ENCODE measurements at regions of chr5 and their contacts with region 1.

Region 1: DNA sequence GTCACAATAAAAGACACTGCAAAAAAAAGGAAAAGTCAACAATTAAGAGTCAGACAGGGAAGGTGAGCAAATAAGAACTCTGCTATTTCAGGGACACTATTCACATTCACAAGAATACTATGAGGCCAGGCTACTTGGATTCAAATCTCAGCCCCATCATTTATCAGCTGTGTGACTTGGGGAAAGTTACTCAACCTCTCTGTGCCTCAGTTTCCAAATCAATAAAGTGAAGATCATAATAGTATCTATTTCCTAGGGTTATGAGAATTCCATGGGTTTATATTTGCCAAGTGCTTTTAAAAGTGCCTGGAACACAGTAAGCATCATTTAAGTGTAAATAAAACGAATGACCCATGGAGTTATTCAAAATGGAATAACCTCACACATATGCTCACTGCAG is 56.4 kb downstream of the ALDH7A1 start:
- DNase-seq: no peak
- ATAC-seq: no peak
- H3K4me3 ChIP-seq: no peak overlapping the region
- H3K4me3 Mint-ChIP-seq: no peak overlapping the region
- H3K27ac ChIP-seq: no peak overlapping the region
- H3K27ac Mint-ChIP-seq: no peak overlapping the region
- H3K4me1 ChIP-seq: no peaks in the 10 kb centered on the region
- H3K4me1 Mint-ChIP-seq: peaks cover 5% of the 10 kb centered on the region
- H3K27me3 ChIP-seq: no peaks in the 10 kb centered on the region
- H3K27me3 Mint-ChIP-seq: no peaks in the 10 kb centered on the region
- CTCF ChIP-seq: no peak

Region 2: DNA sequence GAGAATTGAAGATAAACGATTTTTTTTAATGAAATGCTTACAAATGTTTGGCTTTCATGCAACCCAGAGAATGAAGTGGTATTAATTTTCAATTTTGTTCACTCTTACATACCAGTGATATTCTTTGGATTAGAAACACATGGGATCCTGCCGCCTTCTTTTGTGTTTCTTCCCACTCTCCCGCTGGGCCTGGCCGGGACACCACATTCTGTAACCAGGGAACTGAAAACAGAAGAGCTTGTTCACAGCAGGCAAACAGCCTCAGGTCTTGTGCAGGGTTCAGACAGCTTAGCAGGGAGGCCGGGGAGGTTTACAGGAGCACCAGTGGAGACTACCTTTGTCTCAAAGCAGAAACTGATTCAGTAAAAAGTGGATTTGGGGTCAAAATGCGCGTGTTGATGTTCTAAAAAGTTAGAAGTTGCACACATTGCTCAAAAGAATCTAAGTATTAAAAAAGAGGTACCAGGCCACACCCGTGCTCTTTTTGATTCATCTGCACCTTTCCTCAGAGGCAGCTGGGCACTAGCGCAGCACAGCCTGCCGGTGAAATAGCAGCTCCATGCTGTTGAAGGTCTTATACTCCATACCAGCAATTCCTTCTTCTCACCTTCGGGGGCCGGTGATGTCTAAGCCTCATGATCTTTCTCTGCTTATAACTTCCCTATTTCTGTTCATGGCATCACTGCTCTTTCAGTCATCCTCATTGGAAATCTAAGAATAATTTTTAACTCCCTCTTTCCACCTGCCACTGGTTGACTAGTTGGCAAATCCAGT is 48.2 kb before region 1 on chr5:
- CTCF ChIA-PET with region 1: no interaction called
- POLR2A ChIA-PET with region 1: no interaction called
- intact Hi-C with region 1: loop called in 1 of 2 experiments (anchors 2 kb)
- DNase-seq: no peak
- ATAC-seq: no peak
- H3K4me3 ChIP-seq: no peak overlapping the region
- H3K4me3 Mint-ChIP-seq: no peak overlapping the region
- H3K27ac ChIP-seq: no peak overlapping the region
- H3K27ac Mint-ChIP-seq: peak overlapping the region; percentile 12
- H3K4me1 ChIP-seq: no peaks in the 10 kb centered on the region
- H3K4me1 Mint-ChIP-seq: no peaks in the 10 kb centered on the region
- H3K27me3 ChIP-seq: no peaks in the 10 kb centered on the region
- H3K27me3 Mint-ChIP-seq: no peaks in the 10 kb centered on the region
- CTCF ChIP-seq: no peak

Region 3: DNA sequence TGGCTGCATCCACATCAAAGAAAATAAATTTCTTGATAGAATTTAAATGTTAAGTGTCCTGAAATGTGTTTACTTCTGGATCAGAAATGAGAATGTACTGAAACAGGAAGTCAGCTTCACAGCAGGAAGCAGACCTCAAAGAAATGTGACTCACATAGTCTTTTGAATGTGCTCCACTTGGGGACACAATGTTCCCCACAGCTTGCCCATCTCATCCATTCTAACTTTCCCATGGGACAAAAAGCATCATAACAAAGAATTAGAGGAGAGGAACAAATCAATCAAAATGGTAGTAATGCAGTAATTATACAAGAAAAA is 29.7 kb before region 1 on chr5:
- CTCF ChIA-PET with region 1: no interaction called
- POLR2A ChIA-PET with region 1: no interaction called
- intact Hi-C with region 1: loop called in 1 of 2 experiments (anchors 2 kb)
- DNase-seq: peak in 4 of 14 experiments; percentile 28 to 64 (median 55)
- ATAC-seq: peak; percentile 90
- H3K4me3 ChIP-seq: peak overlapping the region; percentile 29
- H3K4me3 Mint-ChIP-seq: peak overlapping the region; percentile 85
- H3K27ac ChIP-seq: peak overlapping the region in 1 of 2 donors; percentile 11
- H3K27ac Mint-ChIP-seq: peak overlapping the region; percentile 92
- H3K4me1 ChIP-seq: peaks cover 23% of the 10 kb centered on the region
- H3K4me1 Mint-ChIP-seq: peaks cover 50% of the 10 kb centered on the region
- H3K27me3 ChIP-seq: no peaks in the 10 kb centered on the region
- H3K27me3 Mint-ChIP-seq: no peaks in the 10 kb centered on the region
- CTCF ChIP-seq: no peak

Measured in CD4-positive, alpha-beta T cell (primary cell).